MCF 10A (cell line): ENCODE measurements at regions of chr3 and their contacts with region 1.

Region 1: GRCh38 chr3:136861890-136862616 is at the start of gene NCK1:
- DNase-seq: peak; percentile 98
- H3K4me3 Mint-ChIP-seq: peak within 1 kb of the TSS; percentile 87
- H3K27ac Mint-ChIP-seq: peak within 1 kb of the TSS; percentile 88
- H3K4me1 Mint-ChIP-seq: peaks cover 17% of the 10 kb centered on the region
- H3K27me3 Mint-ChIP-seq: no peaks in the 10 kb centered on the region
- CTCF ChIP-seq: no peak
- total RNA-seq, gene NCK1: 50.4 and 59.4 TPM in 2 replicates

Region 2: GRCh38 chr3:135762188-135762856 is 1099.7 kb before region 1 on chr3:
- CTCF ChIA-PET with region 1: no interaction called
- POLR2A ChIA-PET with region 1: no interaction called
- intact Hi-C with region 1: no loop called
- DNase-seq: no peak
- H3K4me3 Mint-ChIP-seq: no peak overlapping the region
- H3K27ac Mint-ChIP-seq: no peak overlapping the region
- H3K4me1 Mint-ChIP-seq: no peaks in the 10 kb centered on the region
- H3K27me3 Mint-ChIP-seq: peaks cover 11% of the 10 kb centered on the region
- CTCF ChIP-seq: no peak

Region 3: GRCh38 chr3:136919799-136920580 is 57.9 kb after region 1 on chr3:
- CTCF ChIA-PET with region 1: no interaction called
- POLR2A ChIA-PET with region 1: interaction called, 10 read pairs
- intact Hi-C with region 1: no loop called
- DNase-seq: no peak
- H3K4me3 Mint-ChIP-seq: no peak overlapping the region
- H3K27ac Mint-ChIP-seq: no peak overlapping the region
- H3K4me1 Mint-ChIP-seq: peaks cover 14% of the 10 kb centered on the region
- H3K27me3 Mint-ChIP-seq: no peaks in the 10 kb centered on the region
- CTCF ChIP-seq: no peak

Region 4: GRCh38 chr3:136938334-136938733 is 76.3 kb after region 1 on chr3:
- CTCF ChIA-PET with region 1: interaction called, 4 read pairs
- POLR2A ChIA-PET with region 1: interaction called, 20 read pairs
- intact Hi-C with region 1: no loop called
- DNase-seq: peak; percentile 55
- H3K4me3 Mint-ChIP-seq: no peak overlapping the region
- H3K27ac Mint-ChIP-seq: peak overlapping the region; percentile 57
- H3K4me1 Mint-ChIP-seq: peaks cover 43% of the 10 kb centered on the region
- H3K27me3 Mint-ChIP-seq: no peaks in the 10 kb centered on the region
- CTCF ChIP-seq: no peak

Region 5: DNA sequence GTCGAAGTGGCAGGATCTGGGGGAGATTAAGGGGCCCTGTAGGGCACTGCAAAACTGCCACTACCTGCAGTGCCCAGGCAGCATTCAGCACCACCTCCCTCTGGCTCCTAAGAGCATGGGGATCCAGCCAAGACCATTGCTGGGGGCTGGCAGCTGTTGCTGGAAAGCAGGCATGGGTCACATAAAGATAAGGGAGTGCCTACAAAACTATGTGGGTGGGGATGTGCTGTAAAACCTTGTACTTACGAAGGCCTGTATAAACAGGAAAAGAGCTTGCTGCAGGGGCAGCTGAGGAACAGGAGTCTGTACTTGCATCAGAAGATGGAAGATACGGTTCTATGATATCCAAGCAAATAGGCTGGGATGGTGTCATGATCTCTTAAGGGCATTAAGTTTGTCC is 122.8 kb after region 1 on chr3:
- CTCF ChIA-PET with region 1: interaction called, 3 read pairs
- POLR2A ChIA-PET with region 1: interaction called, 16 read pairs
- intact Hi-C with region 1: no loop called
- DNase-seq: peak; percentile 84
- H3K4me3 Mint-ChIP-seq: peak overlapping the region; percentile 3
- H3K27ac Mint-ChIP-seq: peak overlapping the region; percentile 57
- H3K4me1 Mint-ChIP-seq: peaks cover 63% of the 10 kb centered on the region
- H3K27me3 Mint-ChIP-seq: no peaks in the 10 kb centered on the region
- CTCF ChIP-seq: no peak